Activated T-helper 1 cell treated with anti-CD3 and anti-CD28 coated beads, Interleukin-12 subunit alpha, Interleukin-12 subunit beta, Interleukin-2, Interleukin-4 antibody, amounts not matched to agents 30 ng/mL and 10 ng/mL and 1 ng/mL, durations not matched to agents 14 hours and 24 hours and 36 hours (primary cell): ENCODE measurements at regions of chr10 and their contacts with region 1.

Region 1: GRCh38 chr10:12594448-12594944 is 245.1 kb downstream of the CAMK1D start:
- DNase-seq: peak; percentile 64
- H3K4me3 Mint-ChIP-seq: peak overlapping the region; percentile 45
- H3K27ac Mint-ChIP-seq: peak overlapping the region; percentile 90
- H3K4me1 Mint-ChIP-seq: peaks cover 95% of the 10 kb centered on the region
- H3K27me3 Mint-ChIP-seq: no peaks in the 10 kb centered on the region

Region 2: DNA sequence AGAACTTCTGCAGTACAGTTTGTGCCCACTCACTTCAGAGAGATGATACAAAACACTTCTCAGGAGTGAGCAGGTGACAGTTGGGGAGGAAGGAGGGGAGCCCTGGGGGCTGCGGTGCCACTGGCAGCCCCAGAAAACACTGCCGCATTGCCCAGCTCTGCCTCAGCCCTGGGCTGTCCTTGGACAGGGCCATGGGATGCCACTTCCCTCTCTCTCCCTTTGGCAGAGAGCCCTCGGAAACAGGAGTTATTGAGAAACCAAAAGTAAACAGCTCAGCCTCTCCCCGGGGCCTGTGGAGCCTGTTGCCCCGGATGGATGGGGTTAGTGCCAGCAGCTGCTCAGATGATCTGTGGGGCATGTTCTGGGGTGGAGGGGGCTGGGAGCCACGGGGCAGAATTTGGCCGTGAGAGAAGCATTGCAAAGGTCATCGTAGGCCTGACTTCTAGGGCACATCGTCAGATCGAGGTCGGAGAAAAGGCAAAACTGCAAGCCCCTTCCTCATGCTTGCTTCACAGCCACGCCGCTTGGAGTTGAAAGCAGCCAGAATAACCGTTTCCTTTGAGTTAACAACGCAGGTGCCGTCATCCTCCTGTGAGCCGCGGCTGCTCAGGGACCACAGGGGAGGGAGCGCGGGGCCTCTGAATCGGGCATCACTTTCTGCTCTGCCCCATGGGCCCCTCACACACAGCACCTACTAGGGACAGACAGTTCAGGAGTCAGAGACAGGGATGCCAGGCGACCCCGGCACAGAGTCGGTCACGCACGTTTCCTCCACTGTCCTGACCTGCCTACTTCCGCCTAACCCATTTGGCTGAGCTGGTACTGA is 11.3 kb after region 1 on chr10:
- intact Hi-C with region 1: loop called (anchors 1 kb)
- DNase-seq: peak; percentile 59
- H3K4me3 Mint-ChIP-seq: peak overlapping the region; percentile 83
- H3K27ac Mint-ChIP-seq: peak overlapping the region; percentile 97
- H3K4me1 Mint-ChIP-seq: peaks cover 43% of the 10 kb centered on the region
- H3K27me3 Mint-ChIP-seq: no peaks in the 10 kb centered on the region

Region 3: DNA sequence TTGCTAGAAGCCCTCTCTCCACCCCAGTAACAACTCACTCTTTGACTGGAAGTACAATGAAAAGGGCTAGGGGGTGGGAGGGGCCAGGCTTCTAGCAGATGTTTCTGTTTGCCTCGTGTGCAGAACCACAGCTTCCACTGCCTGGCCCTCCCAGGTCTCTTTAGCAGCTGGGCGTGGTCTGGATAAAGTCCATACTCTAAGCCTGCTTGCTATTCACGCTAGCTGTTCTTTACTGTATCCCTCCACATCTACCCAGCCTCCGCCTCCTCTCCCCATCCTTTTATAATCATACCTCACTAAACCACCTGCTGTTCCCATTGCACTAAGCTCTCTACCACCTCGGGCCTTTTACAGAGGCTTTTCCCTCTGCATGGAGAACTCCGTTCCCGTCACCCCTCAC is 43.6 kb after region 1 on chr10:
- intact Hi-C with region 1: loop called (anchors 2 kb)
- DNase-seq: peak; percentile 49
- H3K4me3 Mint-ChIP-seq: peak overlapping the region; percentile 24
- H3K27ac Mint-ChIP-seq: peak overlapping the region; percentile 64
- H3K4me1 Mint-ChIP-seq: peaks cover 61% of the 10 kb centered on the region
- H3K27me3 Mint-ChIP-seq: peaks cover 2% of the 10 kb centered on the region

Region 4: GRCh38 chr10:12644380-12645144 is 50.1 kb after region 1 on chr10:
- intact Hi-C with region 1: loop called (anchors 2 kb)
- DNase-seq: no peak
- H3K4me3 Mint-ChIP-seq: peak overlapping the region; percentile 38
- H3K27ac Mint-ChIP-seq: peak overlapping the region; percentile 85
- H3K4me1 Mint-ChIP-seq: peaks cover 27% of the 10 kb centered on the region
- H3K27me3 Mint-ChIP-seq: peaks cover 2% of the 10 kb centered on the region

Region 5: DNA sequence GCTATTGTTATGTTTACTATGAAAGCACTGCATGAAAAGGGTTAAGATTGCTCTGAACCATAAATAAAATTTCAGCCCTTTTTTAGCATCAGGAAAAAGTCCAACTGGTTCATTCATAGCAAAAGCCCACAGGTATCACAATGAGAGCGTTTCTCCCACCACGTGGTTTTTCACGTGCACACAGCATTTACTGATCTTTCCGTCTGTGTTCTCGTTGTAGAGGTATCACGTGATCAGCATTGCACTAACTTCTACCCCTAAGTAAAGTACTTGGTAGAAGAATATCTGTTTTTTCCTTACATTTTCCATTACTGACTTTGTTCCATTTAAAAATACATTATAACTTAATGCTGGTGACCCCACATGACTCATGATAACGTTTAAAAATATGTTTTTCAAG is 424.8 kb after region 1 on chr10:
- intact Hi-C with region 1: no loop called
- DNase-seq: no peak
- H3K4me3 Mint-ChIP-seq: no peak overlapping the region
- H3K27ac Mint-ChIP-seq: no peak overlapping the region
- H3K4me1 Mint-ChIP-seq: no peaks in the 10 kb centered on the region
- H3K27me3 Mint-ChIP-seq: peaks cover 6% of the 10 kb centered on the region